Activated CD4-positive, alpha-beta memory T cell treated with anti-CD3 and anti-CD28 coated beads for 36 hours (primary cell): ENCODE measurements at regions of chr10 and their contacts with region 1.

Region 1: DNA sequence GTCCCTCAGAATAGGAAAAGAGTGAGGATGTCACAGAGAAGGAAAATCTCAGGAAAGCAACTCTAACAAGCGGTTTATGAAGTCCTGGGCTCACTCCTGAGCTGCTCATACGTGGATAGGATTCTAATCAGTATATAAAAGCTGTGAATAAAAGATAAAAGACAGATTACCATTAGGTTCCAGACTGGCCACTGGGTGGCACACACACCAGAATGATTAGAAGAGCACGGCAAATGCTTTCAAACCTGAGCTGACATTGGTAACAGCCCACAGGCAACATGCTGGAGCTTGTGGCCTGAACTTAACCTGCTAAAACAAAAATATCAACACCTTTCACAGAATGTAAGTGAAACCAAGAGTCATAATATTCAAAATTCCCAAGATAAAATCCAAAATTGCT is 370.8 kb downstream of the GRID1 start:
- DNase-seq: peak; percentile 33
- H3K4me3 Mint-ChIP-seq: no peak overlapping the region
- H3K27ac Mint-ChIP-seq: no peak overlapping the region
- H3K4me1 Mint-ChIP-seq: no peaks in the 10 kb centered on the region
- H3K27me3 Mint-ChIP-seq: peaks cover 8% of the 10 kb centered on the region

Region 2: GRCh38 chr10:86139066-86139657 is 143.4 kb after region 1 on chr10:
- CTCF ChIA-PET with region 1: interaction called, 13 read pairs
- POLR2A ChIA-PET with region 1: no interaction called
- intact Hi-C with region 1: loop called (anchors 1 kb)
- DNase-seq: peak; percentile 49
- H3K4me3 Mint-ChIP-seq: no peak overlapping the region
- H3K27ac Mint-ChIP-seq: no peak overlapping the region
- H3K4me1 Mint-ChIP-seq: no peaks in the 10 kb centered on the region
- H3K27me3 Mint-ChIP-seq: peaks cover 1% of the 10 kb centered on the region

Region 3: DNA sequence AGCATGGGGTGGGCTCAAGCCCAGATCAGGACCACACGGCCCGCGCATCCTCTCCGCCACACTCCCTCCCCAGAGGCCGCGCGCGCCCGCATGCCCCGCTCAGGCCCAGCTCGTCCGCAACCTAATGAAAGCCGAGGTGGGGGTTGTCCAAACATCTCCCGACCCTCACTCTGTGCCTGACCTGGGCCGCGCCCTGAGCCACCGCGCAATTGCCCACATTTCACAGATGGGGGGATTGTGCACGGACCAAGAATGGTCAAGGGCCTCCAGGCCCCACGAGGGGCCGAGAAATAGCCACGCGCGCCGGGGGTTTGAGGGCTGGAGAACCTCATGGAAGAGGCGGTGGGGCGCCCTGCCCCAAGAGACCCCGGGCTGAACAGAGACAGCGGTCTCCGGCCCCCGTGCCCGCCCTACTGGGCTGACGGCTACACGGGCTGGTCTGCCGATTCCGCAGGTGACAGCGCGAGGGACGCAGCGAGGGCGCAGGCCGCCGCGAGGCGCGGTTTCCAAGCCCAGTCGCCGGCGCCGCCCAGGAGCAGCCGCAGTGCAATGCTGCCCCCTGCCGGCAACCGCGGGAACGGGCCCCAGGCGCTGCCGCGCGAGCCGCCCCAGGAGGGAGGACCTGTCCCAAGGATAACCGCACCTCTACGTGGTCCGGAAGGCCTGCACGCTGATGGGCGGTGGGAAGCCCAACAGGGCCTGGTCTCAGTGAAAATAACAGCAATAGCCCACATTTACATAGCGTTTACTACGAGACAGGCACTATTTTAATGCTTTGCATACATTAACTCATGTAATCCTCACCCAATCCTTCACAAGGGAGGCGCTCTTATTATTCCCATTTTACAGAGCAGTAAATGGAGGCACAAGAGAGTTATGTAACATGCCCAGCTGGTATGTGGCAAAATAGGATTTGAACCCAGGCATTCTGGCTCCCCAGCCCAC is 381.3 kb after region 1 on chr10:
- CTCF ChIA-PET with region 1: interaction called, 5 read pairs
- POLR2A ChIA-PET with region 1: no interaction called
- intact Hi-C with region 1: loop called (anchors 5 kb)
- DNase-seq: peak; percentile 88
- H3K4me3 Mint-ChIP-seq: no peak overlapping the region
- H3K27ac Mint-ChIP-seq: no peak overlapping the region
- H3K4me1 Mint-ChIP-seq: peaks cover 1% of the 10 kb centered on the region
- H3K27me3 Mint-ChIP-seq: peaks cover 15% of the 10 kb centered on the region

Region 4: GRCh38 chr10:86585037-86585725 is 589.4 kb after region 1 on chr10:
- CTCF ChIA-PET with region 1: interaction called, 4 read pairs
- POLR2A ChIA-PET with region 1: no interaction called
- intact Hi-C with region 1: loop called (anchors 5 kb)
- DNase-seq: peak; percentile 82
- H3K4me3 Mint-ChIP-seq: no peak overlapping the region
- H3K27ac Mint-ChIP-seq: no peak overlapping the region
- H3K4me1 Mint-ChIP-seq: peaks cover 2% of the 10 kb centered on the region
- H3K27me3 Mint-ChIP-seq: no peaks in the 10 kb centered on the region

Region 5: DNA sequence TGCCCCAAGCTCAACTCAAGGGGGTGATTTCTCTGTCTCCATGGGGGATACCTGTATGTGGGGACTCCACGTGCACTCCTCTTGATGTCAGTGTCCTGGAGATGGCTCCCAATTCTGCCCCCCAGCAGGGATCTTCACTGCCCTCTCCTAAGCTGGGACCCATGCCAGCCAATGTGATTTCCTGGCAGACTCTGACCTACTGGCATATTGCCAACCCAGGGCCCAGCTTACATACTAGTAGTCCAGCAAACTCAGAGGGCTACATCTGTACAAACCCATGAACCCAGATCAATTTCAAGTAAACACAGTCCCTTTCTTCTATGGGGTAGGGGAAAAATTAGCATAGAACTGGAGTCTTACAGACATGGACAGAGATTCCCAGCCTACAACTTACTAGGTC is 734.4 kb after region 1 on chr10:
- CTCF ChIA-PET with region 1: no interaction called
- POLR2A ChIA-PET with region 1: no interaction called
- intact Hi-C with region 1: no loop called
- DNase-seq: no peak
- H3K4me3 Mint-ChIP-seq: no peak overlapping the region
- H3K27ac Mint-ChIP-seq: no peak overlapping the region
- H3K4me1 Mint-ChIP-seq: no peaks in the 10 kb centered on the region
- H3K27me3 Mint-ChIP-seq: peaks cover 2% of the 10 kb centered on the region